ENCODE measurements at regions of chr22 and their contacts with region 1.

Region 1: GRCh38 chr22:21636629-21637218 is 4.2 kb downstream of the CCDC116 start:
- DNase-seq: no peak

Region 2: GRCh38 chr22:21076879-21077615 is 559.7 kb before region 1 on chr22:
- intact Hi-C with region 1: loop called in 1 of 2 experiments (anchors 2 kb)
- DNase-seq: peak; percentile 71